ENCODE measurements at regions of chr3 and their contacts with region 1.

Region 1: GRCh38 chr3:100041328-100041749 is 73.0 kb downstream of the FILIP1L start:
- DNase-seq: peak; percentile 99
- H3K4me3 ChIP-seq: peak overlapping the region in 1 of 3 experiments; percentile 29
- H3K27ac ChIP-seq: peak overlapping the region; percentile 100
- H3K4me1 ChIP-seq: peaks cover 46% of the 10 kb centered on the region
- H3K27me3 ChIP-seq: no peaks in the 10 kb centered on the region
- CTCF ChIP-seq: no peak
- POLR2A ChIP-seq: no peak

Region 2: DNA sequence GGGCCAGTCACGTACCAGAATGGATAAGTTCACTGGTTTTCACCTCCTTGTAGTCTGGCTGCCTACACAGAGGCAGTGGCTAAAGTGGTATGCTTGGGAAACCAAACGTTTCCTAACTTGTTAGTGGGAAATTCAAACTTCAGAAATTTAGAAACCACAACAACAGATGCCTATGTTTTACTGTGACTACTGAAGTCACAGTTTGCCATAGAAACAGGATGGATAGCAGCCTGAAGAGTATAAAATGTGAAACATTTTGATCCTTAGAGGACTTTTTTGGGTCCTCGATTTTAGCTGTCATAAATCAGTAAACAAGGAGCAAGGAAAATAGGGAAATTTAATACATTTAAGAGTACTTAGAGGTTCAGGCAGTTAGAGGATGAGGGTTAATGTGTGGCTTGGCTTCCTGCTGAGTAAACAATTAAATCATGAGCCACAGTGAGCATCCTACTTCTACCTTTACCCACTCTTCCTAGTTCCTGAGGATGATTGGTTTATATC is 175.0 kb before region 1 on chr3:
- CTCF ChIA-PET with region 1: interaction called, 3 read pairs
- POLR2A ChIA-PET with region 1: interaction called, 6 read pairs
- dilution Hi-C with region 1: no loop called
- intact Hi-C with region 1: loop called (anchors 1 kb)
- DNase-seq: no peak
- H3K4me3 ChIP-seq: no peak overlapping the region
- H3K27ac ChIP-seq: peak overlapping the region; percentile 80
- H3K4me1 ChIP-seq: peaks cover 57% of the 10 kb centered on the region
- H3K27me3 ChIP-seq: no peaks in the 10 kb centered on the region
- CTCF ChIP-seq: no peak
- POLR2A ChIP-seq: no peak

Region 3: GRCh38 chr3:99895703-99896441 is 145.5 kb before region 1 on chr3:
- CTCF ChIA-PET with region 1: interaction called, 8 read pairs
- POLR2A ChIA-PET with region 1: interaction called, 6 read pairs
- dilution Hi-C with region 1: no loop called
- intact Hi-C with region 1: loop called (anchors 1 kb)
- DNase-seq: peak; percentile 85
- H3K4me3 ChIP-seq: peak overlapping the region in 1 of 3 experiments; percentile 9
- H3K27ac ChIP-seq: peak overlapping the region; percentile 92
- H3K4me1 ChIP-seq: peaks cover 22% of the 10 kb centered on the region
- H3K27me3 ChIP-seq: no peaks in the 10 kb centered on the region
- CTCF ChIP-seq: no peak
- POLR2A ChIP-seq: no peak

Region 4: DNA sequence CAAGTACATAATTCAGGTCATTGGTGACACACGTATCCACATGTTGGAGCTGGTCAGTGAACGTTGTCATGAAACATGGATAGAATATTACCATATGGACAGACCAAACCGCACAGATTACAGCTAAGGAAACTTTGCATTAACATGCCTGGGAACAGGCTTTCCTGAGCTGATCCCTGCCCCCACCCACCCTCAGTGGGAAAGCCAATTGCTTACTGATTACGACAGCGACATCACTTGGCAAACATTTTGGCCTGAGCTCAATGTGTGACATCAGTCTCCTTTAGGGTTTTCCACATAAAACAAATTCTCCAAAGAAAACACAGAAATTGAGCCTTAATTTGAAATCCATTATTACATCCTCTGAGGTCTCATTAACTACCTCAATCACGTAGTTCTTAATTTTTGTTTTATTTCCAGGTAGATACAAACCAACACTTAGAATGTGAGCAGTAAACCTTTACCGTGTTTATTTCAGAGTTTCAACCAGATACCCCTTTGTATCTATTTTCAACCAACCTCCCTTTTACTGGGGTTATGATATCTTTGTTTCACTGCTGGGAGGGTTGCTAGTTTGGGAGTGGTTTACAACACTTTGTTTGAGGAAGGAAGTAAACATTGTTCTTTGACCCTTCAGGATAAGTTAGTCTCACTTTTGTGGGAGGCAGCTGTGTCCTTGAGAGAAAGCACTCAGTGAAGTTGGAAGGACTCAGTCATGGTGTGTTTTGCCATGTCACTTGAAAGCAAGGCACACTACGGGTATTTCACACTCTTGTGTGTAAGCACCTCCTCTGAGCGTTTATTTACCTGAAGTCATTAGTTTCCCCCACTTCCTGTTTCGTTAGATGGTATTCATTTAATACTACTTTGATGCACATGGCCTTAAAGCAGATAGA is 120.6 kb before region 1 on chr3:
- CTCF ChIA-PET with region 1: interaction called, 8 read pairs
- POLR2A ChIA-PET with region 1: interaction called, 5 read pairs
- dilution Hi-C with region 1: no loop called
- intact Hi-C with region 1: loop called (anchors 1 kb)
- DNase-seq: peak; percentile 66
- H3K4me3 ChIP-seq: no peak overlapping the region
- H3K27ac ChIP-seq: peak overlapping the region; percentile 65
- H3K4me1 ChIP-seq: peaks cover 41% of the 10 kb centered on the region
- H3K27me3 ChIP-seq: no peaks in the 10 kb centered on the region
- CTCF ChIP-seq: no peak
- POLR2A ChIP-seq: no peak

Region 5: GRCh38 chr3:100068826-100069225 is 27.5 kb after region 1 on chr3:
- CTCF ChIA-PET with region 1: interaction called, 14 read pairs
- POLR2A ChIA-PET with region 1: interaction called, 5 read pairs
- dilution Hi-C with region 1: no loop called
- intact Hi-C with region 1: loop called (anchors 1 kb)
- DNase-seq: peak; percentile 85
- H3K4me3 ChIP-seq: no peak overlapping the region
- H3K27ac ChIP-seq: peak overlapping the region; percentile 54
- H3K4me1 ChIP-seq: peaks cover 16% of the 10 kb centered on the region
- H3K27me3 ChIP-seq: no peaks in the 10 kb centered on the region
- CTCF ChIP-seq: peak; percentile 71 to 75
- POLR2A ChIP-seq: no peak

Region 6: GRCh38 chr3:100159331-100160153 is 118.2 kb after region 1 on chr3:
- CTCF ChIA-PET with region 1: no interaction called
- POLR2A ChIA-PET with region 1: no interaction called
- dilution Hi-C with region 1: no loop called
- intact Hi-C with region 1: loop called (anchors 1 kb)
- DNase-seq: peak; percentile 94
- H3K4me3 ChIP-seq: peak overlapping the region in 2 of 3 experiments; percentile 14 to 43
- H3K27ac ChIP-seq: peak overlapping the region; percentile 75
- H3K4me1 ChIP-seq: peaks cover 41% of the 10 kb centered on the region
- H3K27me3 ChIP-seq: no peaks in the 10 kb centered on the region
- CTCF ChIP-seq: no peak
- POLR2A ChIP-seq: peak; percentile 22